ENCODE measurements at regions of chr3 and their contacts with region 1.

Region 1: GRCh38 chr3:23425410-23425809 is 222.3 kb downstream of the UBE2E2 start:
- DNase-seq: no peak
- ATAC-seq: no peak
- H3K4me3 Mint-ChIP-seq: no peak overlapping the region
- H3K27ac Mint-ChIP-seq: no peak overlapping the region
- H3K4me1 Mint-ChIP-seq: peaks cover 34% of the 10 kb centered on the region
- H3K27me3 Mint-ChIP-seq: no peaks in the 10 kb centered on the region
- CTCF ChIP-seq: no peak

Region 2: DNA sequence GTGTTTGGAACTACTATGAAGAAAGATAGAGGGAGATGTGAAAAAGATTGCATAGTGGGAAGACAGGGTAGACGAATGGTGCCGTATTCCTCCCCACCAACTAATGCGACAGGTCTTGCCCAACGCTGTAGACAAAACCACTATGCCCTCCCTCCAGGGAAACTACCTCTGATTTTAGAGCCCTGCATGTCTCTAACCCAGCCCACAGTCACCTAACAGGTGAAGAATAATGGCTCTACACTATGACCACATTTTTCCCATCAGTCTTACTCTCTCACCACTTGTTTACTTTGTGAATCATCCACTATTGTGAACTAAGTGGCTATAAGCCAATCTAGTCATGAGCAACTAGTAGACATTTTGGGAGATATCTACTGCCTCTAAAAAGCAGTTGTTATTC is 330.4 kb before region 1 on chr3:
- CTCF ChIA-PET with region 1: no interaction called
- POLR2A ChIA-PET with region 1: no interaction called
- intact Hi-C with region 1: no loop called
- DNase-seq: no peak
- ATAC-seq: no peak
- H3K4me3 Mint-ChIP-seq: no peak overlapping the region
- H3K27ac Mint-ChIP-seq: no peak overlapping the region
- H3K4me1 Mint-ChIP-seq: peaks cover 12% of the 10 kb centered on the region
- H3K27me3 Mint-ChIP-seq: peaks cover 5% of the 10 kb centered on the region
- CTCF ChIP-seq: no peak

Region 3: DNA sequence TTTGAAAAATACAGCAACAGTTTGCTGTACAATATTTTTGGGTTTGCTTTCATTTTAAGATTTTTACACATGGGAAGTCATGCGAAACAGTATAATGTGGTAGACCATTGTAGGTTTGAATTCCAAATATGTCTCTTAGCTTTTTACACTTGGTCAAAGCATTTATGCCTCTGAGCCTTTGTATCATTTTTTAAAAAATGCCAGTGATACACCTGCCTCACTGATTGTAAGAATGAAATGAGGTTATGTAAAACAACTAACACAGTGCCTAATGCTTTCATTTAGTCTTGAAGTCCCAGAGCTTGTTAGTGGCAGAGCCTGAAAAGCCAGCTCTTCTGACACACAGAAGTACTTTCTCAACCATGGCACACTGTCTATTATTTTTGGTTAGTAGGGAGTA is 20.3 kb before region 1 on chr3:
- CTCF ChIA-PET with region 1: interaction called, 3 read pairs
- POLR2A ChIA-PET with region 1: no interaction called
- intact Hi-C with region 1: loop called (anchors 2 kb)
- DNase-seq: no peak
- ATAC-seq: peak; percentile 21
- H3K4me3 Mint-ChIP-seq: peak overlapping the region; percentile 53
- H3K27ac Mint-ChIP-seq: no peak overlapping the region
- H3K4me1 Mint-ChIP-seq: peaks cover 66% of the 10 kb centered on the region
- H3K27me3 Mint-ChIP-seq: no peaks in the 10 kb centered on the region
- CTCF ChIP-seq: no peak

Region 4: DNA sequence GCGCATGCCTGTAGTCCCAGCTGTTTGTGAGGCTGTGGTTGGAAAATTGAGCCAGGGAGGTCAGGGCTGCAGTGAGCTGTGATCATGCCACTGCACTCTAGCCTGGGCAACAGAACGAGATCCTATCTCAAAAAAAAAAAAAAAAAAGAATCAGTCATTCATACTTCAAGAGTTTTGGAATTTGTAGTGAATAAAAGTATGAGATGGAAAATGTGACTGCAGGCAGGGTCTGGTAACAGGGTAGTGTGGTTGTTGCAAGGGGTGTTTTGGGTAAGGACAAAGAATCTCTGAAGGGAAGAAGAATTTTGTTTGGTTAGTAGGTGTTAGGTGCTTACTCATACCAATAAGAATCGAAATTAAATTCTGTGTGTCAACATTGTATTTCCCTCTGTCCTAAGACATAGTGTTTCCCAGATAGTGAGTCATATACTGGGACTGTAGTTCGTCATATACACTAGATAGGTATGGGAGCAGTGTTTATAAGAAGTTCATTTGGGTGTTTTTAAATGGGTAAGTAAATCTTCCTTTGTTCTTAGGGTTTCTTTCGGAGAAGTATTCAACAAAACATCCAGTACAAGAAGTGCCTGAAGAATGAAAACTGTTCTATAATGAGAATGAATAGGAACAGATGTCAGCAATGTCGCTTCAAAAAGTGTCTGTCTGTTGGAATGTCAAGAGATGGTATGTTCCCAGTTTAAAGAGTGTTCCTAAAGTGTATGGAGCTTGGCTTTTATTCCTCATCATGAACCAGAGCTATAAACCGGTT is 533.9 kb after region 1 on chr3:
- CTCF ChIA-PET with region 1: no interaction called
- POLR2A ChIA-PET with region 1: no interaction called
- intact Hi-C with region 1: no loop called
- DNase-seq: no peak
- ATAC-seq: no peak
- H3K4me3 Mint-ChIP-seq: no peak overlapping the region
- H3K27ac Mint-ChIP-seq: peak overlapping the region; percentile 4
- H3K4me1 Mint-ChIP-seq: peaks cover 11% of the 10 kb centered on the region
- H3K27me3 Mint-ChIP-seq: no peaks in the 10 kb centered on the region
- CTCF ChIP-seq: no peak

Measured in activated B cell treated with CpG ODN at 0.5 μM for 24 hours (primary cell).